Heart left ventricle (tissue), 16 donors: ENCODE measurements at regions of chr13 and their contacts with region 1.

Region 1: GRCh38 chr13:41652727-41653361 is 195.5 kb downstream of the RGCC start:
- DNase-seq: peak in 1 of 5 donors; percentile 25
- ATAC-seq: peak in 2 of 4 donors; percentile 25 to 35
- H3K4me3 ChIP-seq: no peak overlapping the region
- H3K27ac ChIP-seq: peak overlapping the region in 6 of 12 donors; percentile 2 to 35 (median 19)
- H3K4me1 ChIP-seq: peaks cover 0 to 26% (median 12%) of the 10 kb centered on the region in 12 donors
- H3K27me3 ChIP-seq: no peaks in the 10 kb centered on the region
- CTCF ChIP-seq: peak; percentile 32 to 76 (median 66)
- POLR2A ChIP-seq: no peak

Region 2: GRCh38 chr13:41384755-41385503 is 267.9 kb before region 1 on chr13:
- intact Hi-C with region 1: loop called in 1 of 10 experiments (anchors 10 kb)
- DNase-seq: no peak
- ATAC-seq: no peak
- H3K4me3 ChIP-seq: no peak overlapping the region
- H3K27ac ChIP-seq: no peak overlapping the region
- H3K4me1 ChIP-seq: peaks cover 0 to 20% (median 12%) of the 10 kb centered on the region in 12 donors
- H3K27me3 ChIP-seq: no peaks in the 10 kb centered on the region
- CTCF ChIP-seq: peak; percentile 20 to 49 (median 34)
- POLR2A ChIP-seq: no peak

Region 3: DNA sequence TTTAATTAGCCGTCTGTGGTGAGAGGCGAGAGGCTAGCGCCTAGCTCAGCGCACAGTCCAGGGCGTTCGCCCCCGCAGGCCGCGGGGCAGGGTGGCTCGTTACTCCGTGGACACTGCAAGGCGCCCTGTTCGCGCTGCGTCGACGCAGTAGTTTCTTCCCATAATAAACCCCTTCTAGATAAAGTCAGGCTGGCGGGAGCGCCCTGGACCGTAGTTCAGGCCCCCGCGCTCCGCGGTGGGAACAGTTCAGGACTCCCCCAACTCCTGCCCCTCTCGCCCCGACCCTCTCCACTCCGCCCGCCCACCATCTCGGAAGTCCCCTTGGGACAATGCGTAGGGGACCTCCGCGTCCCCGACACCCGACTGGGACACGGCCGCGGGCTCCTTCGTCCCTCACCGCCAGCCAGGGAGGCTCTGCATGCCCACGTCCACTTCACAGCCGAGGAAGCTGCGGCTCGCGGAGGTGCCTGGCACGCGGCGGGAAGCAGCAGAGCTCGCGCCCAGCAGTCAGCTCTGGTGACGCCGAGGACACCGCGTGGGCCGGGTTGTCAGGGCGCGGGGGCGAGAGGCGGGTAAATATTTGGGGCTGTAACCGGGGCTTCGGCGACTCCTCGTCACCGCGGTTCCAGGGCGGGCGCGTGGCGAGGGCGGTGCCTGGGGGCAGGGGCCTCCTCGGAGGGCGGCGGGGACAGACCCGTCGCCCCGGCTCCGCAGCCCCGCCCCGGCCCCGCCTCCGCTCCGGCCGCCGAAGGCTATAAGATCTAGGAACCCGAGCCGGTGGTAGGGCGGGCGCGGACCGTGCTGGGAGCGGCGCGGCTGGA is 195.9 kb before region 1 on chr13 and contains the start of gene RGCC:
- intact Hi-C with region 1: loop called in 8 of 10 experiments (anchors 2 to 10 kb)
- DNase-seq: peak; percentile 77 to 91 (median 83)
- ATAC-seq: peak; percentile 70 to 93 (median 88)
- H3K4me3 ChIP-seq: peak within 1 kb of the TSS; percentile 67 to 92 (median 76)
- H3K27ac ChIP-seq: peak within 1 kb of the TSS; percentile 73 to 93 (median 85)
- H3K4me1 ChIP-seq: peaks cover 0 to 41% (median 7%) of the 10 kb centered on the region in 12 donors
- H3K27me3 ChIP-seq: peaks cover 0 to 20% (median 8%) of the 10 kb centered on the region in 9 donors
- CTCF ChIP-seq: no peak
- POLR2A ChIP-seq: peak in 1 of 2 donors; percentile 95
- total RNA-seq, gene RGCC: 22.9 to 228 (median 45.9) TPM

Region 4: DNA sequence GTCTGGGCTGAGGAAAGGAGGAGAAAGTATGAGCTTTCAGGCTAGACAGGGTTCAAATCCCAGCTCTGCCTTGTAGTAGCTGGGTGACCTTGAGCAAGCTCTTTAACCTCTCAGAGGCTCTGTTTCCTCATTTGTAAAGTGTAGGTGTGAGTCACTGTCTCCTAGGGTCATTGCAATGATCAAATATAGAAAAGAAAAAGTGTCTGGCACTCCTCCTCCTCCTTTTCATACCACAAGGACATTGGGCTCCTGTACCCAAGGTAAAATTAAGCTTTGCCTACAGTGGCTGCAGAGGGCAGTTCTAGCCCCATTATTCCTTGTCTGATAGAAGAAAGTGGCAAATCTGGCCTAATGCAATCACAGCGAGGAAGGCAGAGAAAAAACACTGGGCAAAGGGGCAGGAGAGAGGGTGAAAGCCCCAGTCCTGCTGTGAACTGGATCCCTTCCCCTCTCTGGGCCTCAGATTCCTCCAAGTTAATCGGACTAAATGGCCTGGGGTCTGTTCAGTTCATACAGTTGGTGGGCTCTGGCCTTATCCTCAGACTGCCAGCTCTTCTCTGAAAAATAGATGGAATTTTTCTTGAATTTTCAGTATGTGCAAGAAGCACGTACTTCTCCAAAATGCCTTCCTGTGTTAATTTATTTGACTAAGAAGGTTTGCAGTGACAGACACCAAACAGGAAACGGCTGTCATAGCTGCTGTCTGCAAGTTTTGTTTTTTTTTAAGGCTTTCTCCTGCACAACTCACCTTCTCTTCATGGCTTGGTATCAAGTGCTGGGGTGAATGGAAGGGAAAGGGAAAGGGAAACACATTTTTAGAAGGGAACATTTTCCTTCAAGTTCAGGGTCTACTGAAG is 160.2 kb before region 1 on chr13:
- intact Hi-C with region 1: loop called in 1 of 10 experiments (anchors 2 kb)
- DNase-seq: no peak
- ATAC-seq: peak in 1 of 4 donors; percentile 9
- H3K4me3 ChIP-seq: no peak overlapping the region
- H3K27ac ChIP-seq: peak overlapping the region in 10 of 12 donors; percentile 16 to 86 (median 48)
- H3K4me1 ChIP-seq: peaks cover 5 to 54% (median 36%) of the 10 kb centered on the region in 12 donors
- H3K27me3 ChIP-seq: no peaks in the 10 kb centered on the region
- CTCF ChIP-seq: no peak
- POLR2A ChIP-seq: no peak

Region 5: DNA sequence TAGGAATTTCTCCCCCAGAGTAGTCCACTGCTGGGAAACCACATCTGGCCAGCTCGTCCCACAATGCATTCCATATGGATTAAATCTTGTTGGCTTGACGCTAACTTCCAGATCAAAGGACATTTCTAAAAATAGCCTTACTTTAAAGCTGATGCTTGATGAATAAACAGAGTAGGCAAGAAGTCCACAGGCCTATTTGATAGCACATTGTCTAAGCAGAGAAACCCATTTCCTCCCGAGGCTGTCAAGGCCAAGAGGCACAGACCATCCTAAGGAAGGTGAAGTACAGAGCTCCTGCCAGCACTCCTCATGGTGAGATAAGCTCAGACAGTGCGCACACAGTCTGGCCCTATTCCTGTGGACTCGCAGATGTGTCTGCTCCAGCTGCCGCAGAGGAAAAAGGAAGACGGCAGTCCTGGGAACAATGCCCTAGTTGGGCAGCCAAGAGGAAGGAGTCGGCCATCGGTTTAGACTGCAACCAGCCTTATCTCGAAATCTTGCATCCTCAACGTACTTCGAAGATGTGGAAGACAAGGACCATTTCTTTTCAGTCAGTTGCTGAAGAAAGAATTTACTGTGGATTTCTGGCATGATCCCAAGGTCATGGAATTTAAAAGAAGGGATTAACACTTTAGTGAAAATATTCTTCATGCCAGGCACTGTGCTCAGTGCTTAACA is 38.7 kb before region 1 on chr13:
- intact Hi-C with region 1: loop called in 4 of 10 experiments (anchors 5 kb)
- DNase-seq: peak; percentile 75 to 88 (median 80)
- ATAC-seq: peak; percentile 95 to 96 (median 96)
- H3K4me3 ChIP-seq: no peak overlapping the region
- H3K27ac ChIP-seq: peak overlapping the region; percentile 64 to 94 (median 74)
- H3K4me1 ChIP-seq: peaks cover 10 to 48% (median 34%) of the 10 kb centered on the region in 12 donors
- H3K27me3 ChIP-seq: no peaks in the 10 kb centered on the region
- CTCF ChIP-seq: no peak
- POLR2A ChIP-seq: no peak